ENCODE measurements at regions of chr3 and their contacts with region 1.

Region 1: DNA sequence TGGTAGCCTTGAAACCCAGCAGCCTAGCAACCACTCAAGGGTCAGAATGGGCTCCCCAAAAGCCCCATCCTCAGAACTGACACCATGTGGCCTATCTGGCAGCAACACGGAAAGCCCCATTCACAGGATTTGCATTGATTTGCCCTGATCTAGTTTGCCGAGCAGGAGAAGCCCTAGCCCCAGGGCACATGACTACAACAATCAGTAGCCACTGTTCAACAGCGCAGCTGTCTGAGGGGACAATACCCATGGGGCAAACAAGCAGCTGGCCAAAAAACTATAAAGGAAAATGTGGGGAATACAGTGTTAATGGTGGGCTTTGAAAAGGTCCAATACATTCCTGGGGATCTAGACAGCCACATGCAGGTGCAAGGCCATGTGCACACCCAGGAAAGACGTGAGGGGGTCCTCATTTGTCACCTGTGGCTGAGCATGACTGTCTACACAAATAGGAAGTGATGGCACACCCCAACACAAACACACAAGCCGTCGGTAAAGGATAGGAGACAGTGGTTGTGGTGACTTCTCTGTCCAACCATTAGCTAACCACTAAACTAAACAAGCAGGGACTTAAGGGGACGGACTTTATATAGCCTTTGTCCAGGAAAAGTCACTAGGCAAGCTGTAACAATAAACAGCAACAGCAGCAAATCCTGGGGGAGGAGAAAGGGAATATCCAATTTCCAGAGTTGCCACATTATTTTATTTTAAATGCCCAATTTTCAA is 113.7 kb downstream of the LRIG1 start:
- DNase-seq: no peak
- H3K4me3 ChIP-seq: no peak overlapping the region
- H3K27ac ChIP-seq: no peak overlapping the region
- H3K4me1 ChIP-seq: peaks cover 0 to under 1% (median 0%) of the 10 kb centered on the region in 4 donors
- H3K27me3 ChIP-seq: no peaks in the 10 kb centered on the region
- CTCF ChIP-seq: no peak
- EP300 ChIP-seq: no peak
- POLR2A ChIP-seq: no peak

Region 2: DNA sequence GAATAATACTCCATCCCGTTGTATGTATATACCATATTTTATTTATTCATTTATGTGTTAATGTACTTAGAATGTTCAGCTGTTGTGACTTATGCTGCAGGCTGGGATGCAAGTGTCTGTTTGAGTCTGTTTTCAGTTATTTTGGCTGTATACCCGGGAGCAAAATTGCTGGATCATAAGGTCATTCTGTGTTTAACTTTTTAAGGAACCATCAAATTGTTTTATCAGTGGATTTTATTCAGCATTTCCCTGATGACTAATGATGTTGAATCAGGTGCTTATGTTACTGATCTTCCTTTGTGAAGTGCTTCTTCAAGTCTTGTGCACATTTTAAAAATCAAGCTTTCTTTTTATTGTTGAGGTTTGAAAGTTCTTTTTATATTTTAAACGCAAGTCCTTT is 48.2 kb before region 1 on chr3:
- in situ Hi-C with region 1: no loop called
- intact Hi-C with region 1: loop called (anchors 2 kb)
- DNase-seq: no peak
- H3K4me3 ChIP-seq: no peak overlapping the region
- H3K27ac ChIP-seq: no peak overlapping the region
- H3K4me1 ChIP-seq: peaks cover 0 to 14% (median 5%) of the 10 kb centered on the region in 4 donors
- H3K27me3 ChIP-seq: no peaks in the 10 kb centered on the region
- CTCF ChIP-seq: no peak
- EP300 ChIP-seq: no peak
- POLR2A ChIP-seq: no peak

Measured in transverse colon (tissue), 4 donors.